ENCODE measurements at regions of chr20 and their contacts with region 1.

Region 1: DNA sequence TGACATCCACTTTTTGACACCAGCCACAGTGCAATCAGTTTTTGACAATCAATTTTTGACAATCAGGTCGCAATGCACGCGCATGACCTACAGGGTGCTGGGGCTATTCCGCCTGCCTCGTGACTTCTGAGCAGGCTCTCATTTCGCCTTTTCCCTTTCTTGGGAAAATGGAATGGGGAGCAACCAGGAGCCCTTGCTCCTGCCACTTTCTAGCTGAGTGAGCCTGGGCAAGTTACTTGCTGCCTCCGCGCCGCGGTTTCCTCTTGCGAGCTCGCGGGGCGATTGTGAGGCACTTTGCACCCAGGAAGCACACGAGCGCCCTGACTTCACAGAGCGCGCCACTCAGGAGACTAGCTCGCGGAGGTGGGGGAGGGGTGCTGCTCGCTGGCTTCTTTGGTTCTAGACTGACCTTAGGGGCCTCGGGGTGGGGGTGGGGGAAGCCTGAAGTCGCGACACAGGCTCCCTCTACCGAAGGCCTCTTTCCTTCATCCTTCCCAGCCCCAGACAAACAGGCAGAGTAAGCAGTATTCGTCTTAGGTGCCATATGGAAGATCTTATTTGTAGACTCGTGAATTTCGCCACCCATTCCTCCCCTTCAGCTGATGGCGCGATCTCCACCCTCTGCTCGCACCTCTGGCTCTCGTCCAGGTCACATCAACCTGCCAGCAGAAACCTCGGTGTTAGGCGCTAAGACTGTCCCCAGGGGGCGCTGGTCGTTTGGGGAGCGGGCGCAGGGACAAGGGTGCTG is 4.6 kb downstream of the TP53TG5 start:
- DNase-seq: peak; percentile 69 to 74 (median 74)
- H3K4me3 ChIP-seq: peak overlapping the region; percentile 23 to 77 (median 35)
- H3K4me3 Mint-ChIP-seq: peak overlapping the region; percentile 86 to 93
- H3K27ac ChIP-seq: no peak overlapping the region
- H3K27ac Mint-ChIP-seq: peak overlapping the region in 6 of 7 donors; percentile 15 to 78 (median 52)
- H3K4me1 ChIP-seq: peaks cover 23 to 28% of the 10 kb centered on the region in 2 donors
- H3K4me1 Mint-ChIP-seq: peaks cover 28% of the 10 kb centered on the region
- H3K27me3 ChIP-seq: peaks cover 0 to 3% of the 10 kb centered on the region in 2 donors
- H3K27me3 Mint-ChIP-seq: peaks cover 2 to 11% (median 10%) of the 10 kb centered on the region in 3 donors
- CTCF ChIP-seq: peak; percentile 92

Region 2: DNA sequence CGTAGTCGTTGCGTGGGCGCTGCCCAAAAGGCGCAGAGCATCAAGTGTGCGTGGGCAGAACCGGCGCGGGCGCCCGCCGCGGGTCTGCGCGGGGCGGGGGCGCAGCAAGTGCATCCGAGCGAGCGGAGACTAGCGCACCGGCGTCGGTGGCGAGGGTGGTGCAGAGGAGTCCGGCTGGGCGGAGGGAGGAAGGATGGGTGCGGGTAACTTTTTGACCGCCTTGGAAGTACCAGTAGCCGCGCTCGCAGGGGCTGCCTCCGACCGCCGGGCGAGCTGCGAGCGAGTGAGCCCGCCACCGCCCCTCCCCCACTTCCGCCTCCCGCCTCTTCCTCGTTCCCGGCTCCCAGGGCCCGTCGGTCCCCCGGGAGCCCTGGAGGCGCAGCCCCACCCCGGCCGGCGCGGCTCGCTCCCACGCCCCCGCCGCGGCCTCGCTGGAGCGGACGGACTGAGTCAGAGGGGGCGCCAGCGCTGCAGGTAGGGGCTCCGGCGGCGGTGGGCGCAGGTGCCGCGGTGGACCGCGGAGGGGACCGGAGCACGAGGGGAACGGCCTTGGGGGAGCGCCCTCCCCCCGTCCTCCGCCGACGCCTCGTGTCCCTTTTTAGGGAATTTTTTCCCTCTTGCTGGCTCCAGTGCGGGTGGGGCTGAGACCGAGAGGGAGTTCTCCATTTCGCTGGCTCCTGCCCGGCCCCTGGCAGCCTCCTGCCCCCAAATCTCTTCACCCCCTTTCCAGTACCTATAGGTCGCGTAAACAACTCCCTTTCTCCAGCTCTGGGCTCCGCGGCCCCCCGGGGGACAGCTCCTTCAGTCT is 32.9 kb after region 1 on chr20:
- intact Hi-C with region 1: loop called in 1 of 2 experiments (anchors 5 kb)
- DNase-seq: no peak
- H3K4me3 ChIP-seq: peak overlapping the region; percentile 65 to 85 (median 73)
- H3K4me3 Mint-ChIP-seq: peak overlapping the region; percentile 85 to 93
- H3K27ac ChIP-seq: no peak overlapping the region
- H3K27ac Mint-ChIP-seq: peak overlapping the region in 2 of 7 donors; percentile 58 to 69
- H3K4me1 ChIP-seq: peaks cover 28 to 38% of the 10 kb centered on the region in 2 donors
- H3K4me1 Mint-ChIP-seq: peaks cover 30% of the 10 kb centered on the region
- H3K27me3 ChIP-seq: peaks cover 23 to 37% of the 10 kb centered on the region in 2 donors
- H3K27me3 Mint-ChIP-seq: peaks cover 31 to 52% (median 40%) of the 10 kb centered on the region in 3 donors
- CTCF ChIP-seq: no peak

Region 3: GRCh38 chr20:45436732-45437391 is 63.3 kb after region 1 on chr20:
- intact Hi-C with region 1: loop called (anchors 2 to 5 kb)
- DNase-seq: peak; percentile 70 to 83 (median 80)
- H3K4me3 ChIP-seq: peak overlapping the region; percentile 47 to 82 (median 62)
- H3K4me3 Mint-ChIP-seq: peak overlapping the region; percentile 83 to 91
- H3K27ac ChIP-seq: peak overlapping the region in 1 of 2 donors; percentile 42
- H3K27ac Mint-ChIP-seq: peak overlapping the region in 4 of 7 donors; percentile 63 to 80 (median 74)
- H3K4me1 ChIP-seq: peaks cover 9 to 16% of the 10 kb centered on the region in 2 donors
- H3K4me1 Mint-ChIP-seq: peaks cover 13% of the 10 kb centered on the region
- H3K27me3 ChIP-seq: no peaks in the 10 kb centered on the region
- H3K27me3 Mint-ChIP-seq: peaks cover 0 to 2% (median 2%) of the 10 kb centered on the region in 3 donors
- CTCF ChIP-seq: peak; percentile 96

Measured in CD14-positive monocyte (primary cell).